Dendritic cell treated with granulocyte-macrophage colony-stimulating factor and Interleukin-4, amounts not matched to agents 40 ng/mL and 50 ng/mL, for 4 days (primary cell): ENCODE measurements at regions of chr12 and their contacts with region 1.

Region 1: GRCh38 chr12:9651265-9651729 is 18.2 kb upstream of the CLEC2D start:
- H3K4me3 Mint-ChIP-seq: no peak overlapping the region
- H3K27ac Mint-ChIP-seq: peak overlapping the region; percentile 96
- H3K4me1 Mint-ChIP-seq: peaks cover 57% of the 10 kb centered on the region
- H3K27me3 Mint-ChIP-seq: no peaks in the 10 kb centered on the region

Region 2: GRCh38 chr12:9699898-9700605 is 48.8 kb after region 1 on chr12:
- intact Hi-C with region 1: loop called (anchors 5 kb)
- H3K4me3 Mint-ChIP-seq: no peak overlapping the region
- H3K27ac Mint-ChIP-seq: no peak overlapping the region
- H3K4me1 Mint-ChIP-seq: peaks cover 54% of the 10 kb centered on the region
- H3K27me3 Mint-ChIP-seq: no peaks in the 10 kb centered on the region

Region 3: DNA sequence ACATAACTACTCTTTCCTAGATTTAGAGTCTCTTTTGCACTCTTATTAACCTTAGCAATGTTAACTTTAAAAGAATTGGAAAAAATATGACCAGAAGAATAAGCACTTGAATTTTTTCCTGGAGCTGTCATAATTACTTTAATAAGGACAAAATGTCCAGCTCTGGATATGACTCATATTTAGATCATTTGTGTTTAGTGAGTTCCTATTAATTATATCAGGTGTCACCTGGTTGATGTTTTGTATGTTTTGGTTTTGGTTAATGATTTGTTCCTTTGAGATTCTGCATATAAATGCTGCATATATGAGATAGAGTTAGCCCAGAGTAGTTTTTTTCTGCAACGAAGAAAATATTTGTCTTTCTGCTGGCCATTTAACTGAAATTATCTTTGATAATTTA is 76.5 kb after region 1 on chr12:
- intact Hi-C with region 1: loop called (anchors 5 kb)
- H3K4me3 Mint-ChIP-seq: no peak overlapping the region
- H3K27ac Mint-ChIP-seq: no peak overlapping the region
- H3K4me1 Mint-ChIP-seq: peaks cover 13% of the 10 kb centered on the region
- H3K27me3 Mint-ChIP-seq: no peaks in the 10 kb centered on the region